CD8-positive, alpha-beta T cell (primary cell): ENCODE measurements at regions of chr1 and their contacts with region 1.

Region 1: DNA sequence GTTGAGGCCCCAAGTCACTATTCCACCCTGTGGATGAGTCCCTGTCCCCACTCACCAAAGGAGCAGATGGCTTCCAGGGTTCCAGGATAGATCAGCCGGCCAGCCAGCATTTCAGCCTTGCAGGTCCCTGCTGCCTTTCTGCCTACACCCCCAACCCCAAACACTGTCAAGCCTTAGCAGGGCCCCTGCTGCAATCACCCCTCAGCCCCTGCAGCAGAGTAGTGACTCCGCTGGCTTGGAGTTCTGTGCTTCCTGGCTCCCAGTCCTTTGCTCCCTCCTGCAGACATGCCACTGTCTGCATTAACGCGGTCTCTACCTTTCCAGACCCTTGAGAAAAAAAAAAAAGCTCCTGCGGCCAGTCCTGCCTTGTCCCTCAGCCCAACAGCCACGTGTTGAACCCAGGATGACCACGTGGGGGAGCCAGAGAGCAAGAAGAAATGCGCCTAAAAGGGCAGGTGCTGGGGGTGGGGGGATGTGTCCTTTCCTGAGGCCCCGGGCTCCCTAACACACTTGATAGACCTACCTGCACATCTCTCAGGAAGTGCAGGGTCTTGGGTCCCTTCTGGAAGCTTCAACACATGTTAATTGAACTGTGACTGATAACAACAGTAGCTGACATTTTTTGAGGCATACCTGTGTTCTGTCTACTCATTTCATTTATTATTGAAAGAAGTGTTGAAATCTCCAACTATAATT is 37.4 kb downstream of the RASSF5 start:
- DNase-seq: peak; percentile 71 to 93 (median 82)
- ATAC-seq: peak; percentile 95
- H3K4me3 ChIP-seq: no peak overlapping the region
- H3K4me3 Mint-ChIP-seq: no peak overlapping the region
- H3K27ac ChIP-seq: no peak overlapping the region
- H3K27ac Mint-ChIP-seq: no peak overlapping the region
- H3K4me1 ChIP-seq: peaks cover 9% of the 10 kb centered on the region
- H3K4me1 Mint-ChIP-seq: peaks cover 16% of the 10 kb centered on the region
- H3K27me3 ChIP-seq: no peaks in the 10 kb centered on the region
- H3K27me3 Mint-ChIP-seq: no peaks in the 10 kb centered on the region
- CTCF ChIP-seq: peak; percentile 95

Region 2: GRCh38 chr1:206461602-206462455 is 82.9 kb before region 1 on chr1:
- CTCF ChIA-PET with region 1: interaction called, 30 read pairs
- POLR2A ChIA-PET with region 1: no interaction called
- intact Hi-C with region 1: no loop called
- DNase-seq: peak; percentile 54 to 82 (median 74)
- ATAC-seq: peak; percentile 95
- H3K4me3 ChIP-seq: no peak overlapping the region
- H3K4me3 Mint-ChIP-seq: no peak overlapping the region
- H3K27ac ChIP-seq: no peak overlapping the region
- H3K27ac Mint-ChIP-seq: no peak overlapping the region
- H3K4me1 ChIP-seq: peaks cover 10% of the 10 kb centered on the region
- H3K4me1 Mint-ChIP-seq: peaks cover 19% of the 10 kb centered on the region
- H3K27me3 ChIP-seq: no peaks in the 10 kb centered on the region
- H3K27me3 Mint-ChIP-seq: no peaks in the 10 kb centered on the region
- CTCF ChIP-seq: peak; percentile 75

Region 3: DNA sequence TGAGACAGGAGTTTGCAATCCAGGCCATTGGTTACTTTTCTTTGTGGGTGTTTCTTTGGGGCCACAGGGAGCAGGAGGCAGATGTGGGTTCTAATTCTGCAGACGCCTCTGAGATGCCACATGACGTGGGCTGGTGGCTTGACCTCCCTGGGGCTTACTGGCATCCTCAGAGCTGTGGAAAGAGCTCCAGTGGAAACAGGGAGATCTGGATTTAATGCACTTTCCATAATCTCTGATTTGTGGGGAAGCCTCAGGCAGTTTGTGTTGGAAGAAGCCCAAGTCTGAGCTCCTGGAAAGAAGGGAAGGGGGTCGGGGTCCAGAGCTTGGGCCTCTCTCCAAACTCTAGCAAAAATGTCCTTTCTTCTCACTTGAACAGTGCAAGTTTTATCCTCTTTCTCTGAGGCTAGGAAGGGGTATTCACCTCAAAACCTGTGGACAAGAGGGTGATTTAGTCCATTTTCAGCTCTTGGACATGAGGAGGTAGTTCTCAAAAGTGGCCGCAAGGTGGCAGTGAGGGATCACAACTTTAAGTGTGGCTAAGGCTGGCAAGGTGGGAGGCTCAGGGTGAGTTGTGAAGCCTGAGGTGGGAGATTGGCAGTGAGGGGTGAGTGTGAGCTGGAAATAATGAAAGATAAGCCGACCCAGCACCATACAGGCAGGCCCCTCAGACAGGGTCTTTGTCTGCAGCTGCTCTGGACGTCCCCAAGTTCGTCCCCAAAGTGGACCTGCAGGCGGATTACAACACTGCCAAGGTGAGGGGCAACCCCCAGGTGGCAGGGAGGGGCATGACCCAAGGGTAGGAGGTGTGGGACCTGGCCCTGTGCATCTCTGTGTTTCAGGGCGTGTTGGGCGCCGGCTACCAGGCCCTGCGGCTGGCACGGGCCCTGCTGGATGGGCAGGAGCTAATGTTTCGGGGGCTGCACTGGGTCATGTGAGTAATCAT is 65.3 kb before region 1 on chr1:
- CTCF ChIA-PET with region 1: interaction called, 34 read pairs
- POLR2A ChIA-PET with region 1: no interaction called
- intact Hi-C with region 1: no loop called
- DNase-seq: peak; percentile 46 to 82 (median 73)
- ATAC-seq: peak; percentile 93
- H3K4me3 ChIP-seq: no peak overlapping the region
- H3K4me3 Mint-ChIP-seq: no peak overlapping the region
- H3K27ac ChIP-seq: no peak overlapping the region
- H3K27ac Mint-ChIP-seq: peak overlapping the region; percentile 80
- H3K4me1 ChIP-seq: peaks cover 13% of the 10 kb centered on the region
- H3K4me1 Mint-ChIP-seq: peaks cover 10% of the 10 kb centered on the region
- H3K27me3 ChIP-seq: no peaks in the 10 kb centered on the region
- H3K27me3 Mint-ChIP-seq: no peaks in the 10 kb centered on the region
- CTCF ChIP-seq: peak; percentile 80

Region 4: GRCh38 chr1:206556750-206557635 is 12.3 kb after region 1 on chr1:
- CTCF ChIA-PET with region 1: interaction called, 86 read pairs
- POLR2A ChIA-PET with region 1: interaction called, 9 read pairs
- intact Hi-C with region 1: loop called in 1 of 2 experiments (anchors 2 kb)
- DNase-seq: peak; percentile 72 to 95 (median 92)
- ATAC-seq: peak; percentile 64
- H3K4me3 ChIP-seq: peak overlapping the region; percentile 82 to 94
- H3K4me3 Mint-ChIP-seq: peak overlapping the region; percentile 95
- H3K27ac ChIP-seq: peak overlapping the region; percentile 81
- H3K27ac Mint-ChIP-seq: peak overlapping the region; percentile 95
- H3K4me1 ChIP-seq: peaks cover 69% of the 10 kb centered on the region
- H3K4me1 Mint-ChIP-seq: peaks cover 79% of the 10 kb centered on the region
- H3K27me3 ChIP-seq: no peaks in the 10 kb centered on the region
- H3K27me3 Mint-ChIP-seq: no peaks in the 10 kb centered on the region
- CTCF ChIP-seq: no peak

Region 5: DNA sequence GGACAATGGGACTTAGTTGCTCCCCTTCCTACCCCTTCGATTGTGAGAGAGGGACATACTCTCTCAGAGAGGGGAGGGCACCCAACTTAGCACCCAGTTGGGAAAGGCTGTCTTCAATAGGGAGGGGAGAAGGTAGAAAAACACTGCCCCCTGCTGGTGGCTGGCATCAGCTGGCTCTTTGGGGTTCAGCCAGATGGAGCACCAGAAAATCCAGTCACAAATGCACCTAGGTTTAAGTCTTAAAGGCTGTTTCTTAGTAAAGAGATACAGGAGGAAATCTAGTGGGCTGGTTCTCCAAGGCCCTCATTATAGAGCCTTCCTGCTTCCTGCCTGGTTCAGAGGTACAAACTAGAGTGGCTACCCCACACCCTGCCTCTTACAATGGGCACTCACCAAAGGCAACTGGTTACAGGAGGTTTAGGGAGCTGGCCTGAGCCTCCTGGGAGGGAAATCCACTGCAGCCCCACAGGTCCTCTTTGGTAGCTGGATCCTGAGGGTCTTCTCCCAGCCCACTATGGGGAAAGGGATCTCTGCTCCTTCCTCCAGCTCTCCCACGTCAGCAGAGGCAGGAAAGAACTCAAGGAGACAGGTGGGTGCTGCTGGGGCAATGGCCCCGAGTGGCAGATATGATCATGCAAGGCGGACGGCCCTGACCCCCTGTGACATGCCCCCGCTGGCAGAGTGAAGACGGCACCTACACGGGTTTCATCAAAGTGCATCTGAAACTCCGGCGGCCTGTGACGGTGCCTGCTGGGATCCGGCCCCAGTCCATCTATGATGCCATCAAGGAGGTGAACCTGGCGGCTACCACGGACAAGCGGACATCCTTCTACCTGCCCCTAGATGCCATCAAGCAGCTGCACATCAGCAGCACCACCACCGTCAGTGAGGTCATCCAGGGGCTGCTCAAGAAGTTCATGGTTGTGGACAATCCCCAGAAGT is 39.3 kb after region 1 on chr1:
- CTCF ChIA-PET with region 1: interaction called, 709 read pairs
- POLR2A ChIA-PET with region 1: interaction called, 16 read pairs
- intact Hi-C with region 1: loop called (anchors 1 kb)
- DNase-seq: peak; percentile 70 to 93 (median 89)
- ATAC-seq: peak; percentile 18
- H3K4me3 ChIP-seq: no peak overlapping the region
- H3K4me3 Mint-ChIP-seq: peak overlapping the region; percentile 77
- H3K27ac ChIP-seq: peak overlapping the region; percentile 3 to 95
- H3K27ac Mint-ChIP-seq: peak overlapping the region; percentile 96
- H3K4me1 ChIP-seq: peaks cover 50% of the 10 kb centered on the region
- H3K4me1 Mint-ChIP-seq: peaks cover 68% of the 10 kb centered on the region
- H3K27me3 ChIP-seq: no peaks in the 10 kb centered on the region
- H3K27me3 Mint-ChIP-seq: no peaks in the 10 kb centered on the region
- CTCF ChIP-seq: peak; percentile 92

Region 6: GRCh38 chr1:206766251-206766856 is 221.6 kb after region 1 on chr1:
- CTCF ChIA-PET with region 1: no interaction called
- POLR2A ChIA-PET with region 1: no interaction called
- intact Hi-C with region 1: no loop called
- DNase-seq: peak; percentile 47 to 89 (median 77)
- ATAC-seq: peak; percentile 77
- H3K4me3 ChIP-seq: peak overlapping the region; percentile 3 to 9
- H3K4me3 Mint-ChIP-seq: peak overlapping the region; percentile 61
- H3K27ac ChIP-seq: no peak overlapping the region
- H3K27ac Mint-ChIP-seq: peak overlapping the region; percentile 82
- H3K4me1 ChIP-seq: peaks cover 63% of the 10 kb centered on the region
- H3K4me1 Mint-ChIP-seq: peaks cover 61% of the 10 kb centered on the region
- H3K27me3 ChIP-seq: no peaks in the 10 kb centered on the region
- H3K27me3 Mint-ChIP-seq: no peaks in the 10 kb centered on the region
- CTCF ChIP-seq: no peak